ENCODE measurements at regions of chr4 and their contacts with region 1.

Region 1: DNA sequence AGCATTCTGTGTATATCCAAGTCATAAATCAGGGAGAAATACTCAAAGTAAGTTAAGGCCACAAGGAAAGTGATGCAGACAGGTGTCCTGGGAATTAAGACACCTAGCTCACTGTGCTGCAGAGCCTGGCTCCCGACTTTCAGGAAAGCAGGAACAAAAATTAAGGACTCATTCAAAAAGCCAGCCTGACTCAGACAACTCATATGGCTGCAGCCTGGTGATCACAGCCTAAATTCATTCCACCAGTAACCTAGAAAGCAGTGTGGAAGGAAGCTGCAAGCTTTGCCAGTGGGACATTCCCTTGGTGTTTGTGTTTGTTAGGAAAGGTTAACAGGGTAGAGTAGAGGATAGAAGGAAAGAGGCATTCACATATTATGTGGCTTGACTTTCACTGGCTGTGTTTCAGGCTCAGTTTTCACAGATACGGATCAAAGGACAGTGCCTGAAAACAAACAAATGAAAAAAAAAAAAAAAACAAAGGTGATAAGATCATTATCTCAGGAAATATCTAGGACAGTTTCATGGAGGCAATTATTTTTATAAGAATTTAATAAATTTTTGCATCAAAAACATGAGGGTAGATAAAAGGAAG is 387.2 kb downstream of the INPP4B start:
- DNase-seq: no peak
- H3K4me3 ChIP-seq: no peak overlapping the region
- H3K4me3 Mint-ChIP-seq: no peak overlapping the region
- H3K27ac Mint-ChIP-seq: no peak overlapping the region
- H3K4me1 ChIP-seq: no peaks in the 10 kb centered on the region
- H3K4me1 Mint-ChIP-seq: peaks cover 8% of the 10 kb centered on the region
- H3K27me3 ChIP-seq: no peaks in the 10 kb centered on the region
- H3K27me3 Mint-ChIP-seq: no peaks in the 10 kb centered on the region
- CTCF ChIP-seq: no peak

Region 2: GRCh38 chr4:142474335-142475087 is 15.6 kb after region 1 on chr4:
- CTCF ChIA-PET with region 1: interaction called, 3 read pairs
- POLR2A ChIA-PET with region 1: no interaction called
- intact Hi-C with region 1: loop called (anchors 2 kb)
- DNase-seq: peak in 1 of 2 experiments; percentile 15
- H3K4me3 ChIP-seq: no peak overlapping the region
- H3K4me3 Mint-ChIP-seq: no peak overlapping the region
- H3K27ac Mint-ChIP-seq: no peak overlapping the region
- H3K4me1 ChIP-seq: peaks cover 11% of the 10 kb centered on the region
- H3K4me1 Mint-ChIP-seq: peaks cover 14% of the 10 kb centered on the region
- H3K27me3 ChIP-seq: no peaks in the 10 kb centered on the region
- H3K27me3 Mint-ChIP-seq: no peaks in the 10 kb centered on the region
- CTCF ChIP-seq: no peak

Region 3: GRCh38 chr4:142707401-142707800 is 248.5 kb after region 1 on chr4:
- CTCF ChIA-PET with region 1: no interaction called
- POLR2A ChIA-PET with region 1: no interaction called
- intact Hi-C with region 1: no loop called
- DNase-seq: no peak
- H3K4me3 ChIP-seq: no peak overlapping the region
- H3K4me3 Mint-ChIP-seq: no peak overlapping the region
- H3K27ac Mint-ChIP-seq: no peak overlapping the region
- H3K4me1 ChIP-seq: no peaks in the 10 kb centered on the region
- H3K4me1 Mint-ChIP-seq: no peaks in the 10 kb centered on the region
- H3K27me3 ChIP-seq: no peaks in the 10 kb centered on the region
- H3K27me3 Mint-ChIP-seq: no peaks in the 10 kb centered on the region
- CTCF ChIP-seq: no peak

Region 4: GRCh38 chr4:142781114-142781513 is 322.2 kb after region 1 on chr4:
- CTCF ChIA-PET with region 1: no interaction called
- POLR2A ChIA-PET with region 1: no interaction called
- intact Hi-C with region 1: no loop called
- DNase-seq: no peak
- H3K4me3 ChIP-seq: no peak overlapping the region
- H3K4me3 Mint-ChIP-seq: no peak overlapping the region
- H3K27ac Mint-ChIP-seq: no peak overlapping the region
- H3K4me1 ChIP-seq: no peaks in the 10 kb centered on the region
- H3K4me1 Mint-ChIP-seq: no peaks in the 10 kb centered on the region
- H3K27me3 ChIP-seq: no peaks in the 10 kb centered on the region
- H3K27me3 Mint-ChIP-seq: no peaks in the 10 kb centered on the region
- CTCF ChIP-seq: no peak